Activated T-helper 2 cell treated with anti-CD3 and anti-CD28 coated beads, Interferon-gamma antibody, Interleukin-2, Interleukin-4, amounts not matched to agents 10 μg/mL and 5 μg/mL and 100 μg/mL, durations not matched to agents 14 hours and 24 hours and 36 hours (primary cell): ENCODE measurements at regions of chr22 and their contacts with region 1.

Region 1: DNA sequence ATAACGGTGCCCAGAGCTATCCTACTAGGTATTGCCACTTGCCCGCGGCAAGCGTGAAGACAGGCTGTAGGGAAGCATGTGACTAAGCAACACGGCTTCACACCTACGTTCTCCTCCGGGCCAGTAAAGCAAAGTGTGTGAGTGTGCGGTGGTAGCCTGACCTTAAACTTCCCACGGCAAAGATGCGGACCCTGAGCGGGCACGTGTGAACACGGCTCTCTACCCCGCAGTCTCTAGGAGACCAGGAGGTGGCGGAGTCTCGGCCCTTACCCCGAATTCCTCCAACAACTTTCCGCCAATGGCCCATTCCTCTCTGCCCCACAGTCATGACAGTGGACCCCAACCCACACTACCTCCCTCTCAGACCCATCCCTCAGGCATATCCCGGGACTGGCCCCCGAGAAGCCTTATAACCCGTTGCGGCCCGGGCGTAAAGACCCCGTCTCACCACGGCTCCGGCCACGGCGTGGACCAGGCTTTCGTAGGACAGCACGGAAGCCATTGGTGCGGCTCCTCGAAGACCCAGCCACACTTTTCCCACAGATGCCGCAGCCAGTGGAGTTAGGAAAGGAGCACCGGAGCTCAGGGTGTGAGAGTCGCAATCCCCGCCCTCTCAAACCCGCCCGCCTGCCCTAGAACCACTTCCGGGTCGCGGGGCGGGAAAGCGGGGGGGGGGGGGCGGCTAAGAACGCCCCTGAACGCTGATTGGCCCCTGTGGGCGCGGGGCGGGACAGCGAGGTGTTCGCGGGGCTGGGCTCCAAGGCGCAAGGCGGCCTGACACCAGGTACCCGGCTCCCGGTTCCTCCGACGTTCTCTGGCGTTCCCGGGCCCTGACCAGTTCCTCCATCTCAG is at the start of gene SLC25A17:
- DNase-seq: peak; percentile 80
- H3K4me3 Mint-ChIP-seq: peak within 1 kb of the TSS; percentile 82
- H3K27ac Mint-ChIP-seq: peak within 1 kb of the TSS; percentile 80
- H3K4me1 Mint-ChIP-seq: peaks cover 33% of the 10 kb centered on the region
- H3K27me3 Mint-ChIP-seq: no peaks in the 10 kb centered on the region
- total RNA-seq, gene SLC25A17: 27.3 and 33.0 TPM in 2 replicates

Region 2: GRCh38 chr22:40714192-40714951 is 104.6 kb before region 1 on chr22:
- intact Hi-C with region 1: loop called (anchors 5 kb)
- DNase-seq: no peak
- H3K4me3 Mint-ChIP-seq: no peak overlapping the region
- H3K27ac Mint-ChIP-seq: no peak overlapping the region
- H3K4me1 Mint-ChIP-seq: peaks cover 27% of the 10 kb centered on the region
- H3K27me3 Mint-ChIP-seq: peaks cover 17% of the 10 kb centered on the region

Region 3: DNA sequence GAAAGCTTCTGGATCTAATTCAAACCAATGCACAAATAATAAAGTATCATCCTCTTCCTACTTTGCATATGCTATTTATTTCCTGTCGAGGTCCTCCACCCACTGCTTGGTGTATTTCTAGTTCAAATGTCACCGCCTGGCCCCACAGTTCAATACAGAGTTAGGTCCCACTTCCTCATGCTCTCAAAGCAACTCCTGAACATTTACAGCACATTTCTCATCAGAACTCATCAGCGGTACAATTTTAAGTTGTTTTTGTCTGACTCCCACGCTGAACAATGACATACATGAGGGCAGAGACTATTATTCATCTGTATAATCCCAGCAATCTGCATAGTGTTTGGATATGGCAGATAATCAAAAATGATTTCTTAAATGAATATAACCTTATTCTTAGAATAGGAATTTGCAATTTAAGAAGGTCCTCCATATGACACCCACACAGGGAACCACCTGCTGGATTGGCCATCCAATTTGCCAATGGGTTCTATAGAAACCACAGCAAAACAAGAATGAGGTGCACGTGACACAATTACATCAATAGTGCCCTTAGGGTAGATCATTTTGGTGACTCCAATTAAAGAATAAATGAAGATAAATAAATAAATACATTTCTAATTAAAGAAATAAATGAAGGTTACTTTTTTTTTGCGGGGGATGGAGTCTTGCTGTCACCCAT is 54.1 kb before region 1 on chr22:
- intact Hi-C with region 1: loop called (anchors 10 kb)
- DNase-seq: no peak
- H3K4me3 Mint-ChIP-seq: no peak overlapping the region
- H3K27ac Mint-ChIP-seq: peak overlapping the region; percentile 83
- H3K4me1 Mint-ChIP-seq: peaks cover 21% of the 10 kb centered on the region
- H3K27me3 Mint-ChIP-seq: no peaks in the 10 kb centered on the region

Region 4: GRCh38 chr22:40791241-40791640 is 27.7 kb before region 1 on chr22:
- intact Hi-C with region 1: no loop called
- DNase-seq: no peak
- H3K4me3 Mint-ChIP-seq: no peak overlapping the region
- H3K27ac Mint-ChIP-seq: no peak overlapping the region
- H3K4me1 Mint-ChIP-seq: peaks cover 14% of the 10 kb centered on the region
- H3K27me3 Mint-ChIP-seq: no peaks in the 10 kb centered on the region

Region 5: GRCh38 chr22:40856513-40857308 is 37.7 kb after region 1 on chr22 and contains the starts of genes ST13 and XPNPEP3:
- intact Hi-C with region 1: loop called (anchors 5 kb)
- DNase-seq: peak; percentile 96
- H3K4me3 Mint-ChIP-seq: peak within 1 kb of the TSS; percentile 96
- H3K27ac Mint-ChIP-seq: peak within 1 kb of the TSS; percentile 100
- H3K4me1 Mint-ChIP-seq: peaks cover 38% of the 10 kb centered on the region
- H3K27me3 Mint-ChIP-seq: no peaks in the 10 kb centered on the region
- total RNA-seq, gene ST13: 194 and 201 TPM in 2 replicates
- total RNA-seq, gene XPNPEP3: 17.5 and 17.9 TPM in 2 replicates

Region 6: GRCh38 chr22:40898850-40899357 is 79.9 kb after region 1 on chr22:
- intact Hi-C with region 1: loop called (anchors 2 kb)
- DNase-seq: no peak
- H3K4me3 Mint-ChIP-seq: peak overlapping the region; percentile 11
- H3K27ac Mint-ChIP-seq: peak overlapping the region; percentile 70
- H3K4me1 Mint-ChIP-seq: peaks cover 20% of the 10 kb centered on the region
- H3K27me3 Mint-ChIP-seq: no peaks in the 10 kb centered on the region